PC-9 (cell line): ENCODE measurements at regions of chr6 and their contacts with region 1.

Region 1: GRCh38 chr6:10521104-10521808 is at the start of gene GCNT2:
- DNase-seq: peak; percentile 80 to 92
- H3K4me3 ChIP-seq: peak within 1 kb of the TSS; percentile 46; the same call in 1 of the 2 replicates
- H3K27ac ChIP-seq: peak within 1 kb of the TSS; percentile 99
- H3K4me1 ChIP-seq: peaks cover 42% of the 10 kb centered on the region
- H3K27me3 ChIP-seq: no peaks in the 10 kb centered on the region
- CTCF ChIP-seq: no peak
- total RNA-seq, gene GCNT2: 28.4 and 35.7 TPM in 2 replicates

Region 2: DNA sequence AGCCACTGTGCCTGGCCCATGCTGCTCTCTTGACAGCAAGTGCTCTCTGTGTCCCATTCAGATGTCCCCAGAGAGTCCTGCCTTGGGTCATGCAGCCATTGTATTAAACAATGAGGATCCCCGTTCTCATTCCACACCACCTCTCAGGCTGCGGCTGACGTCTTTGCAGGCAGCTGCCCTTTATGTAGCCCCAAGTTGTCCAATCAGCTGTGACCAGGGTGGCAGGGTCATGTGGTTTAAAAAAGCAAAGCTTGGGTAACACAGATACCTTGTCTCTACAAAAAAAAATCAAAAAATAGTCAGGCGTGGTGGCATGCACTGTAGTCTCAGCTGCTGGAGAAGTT is 13.1 kb after region 1 on chr6:
- CTCF ChIA-PET with region 1: interaction called, 5 read pairs
- POLR2A ChIA-PET with region 1: interaction called, 27 read pairs
- intact Hi-C with region 1: loop called (anchors 1 kb)
- DNase-seq: no peak
- H3K4me3 ChIP-seq: no peak overlapping the region
- H3K27ac ChIP-seq: no peak overlapping the region
- H3K4me1 ChIP-seq: peaks cover 23% of the 10 kb centered on the region
- H3K27me3 ChIP-seq: no peaks in the 10 kb centered on the region
- CTCF ChIP-seq: no peak

Region 3: GRCh38 chr6:11288047-11288461 is 766.8 kb after region 1 on chr6:
- CTCF ChIA-PET with region 1: no interaction called
- POLR2A ChIA-PET with region 1: no interaction called
- intact Hi-C with region 1: no loop called
- DNase-seq: no peak
- H3K4me3 ChIP-seq: no peak overlapping the region
- H3K27ac ChIP-seq: no peak overlapping the region
- H3K4me1 ChIP-seq: no peaks in the 10 kb centered on the region
- H3K27me3 ChIP-seq: no peaks in the 10 kb centered on the region
- CTCF ChIP-seq: no peak